Activated T-helper 2 cell treated with anti-CD3 and anti-CD28 coated beads, Interferon-gamma antibody, Interleukin-2, Interleukin-4, amounts not matched to agents 10 μg/mL and 5 μg/mL and 100 μg/mL, durations not matched to agents 14 hours and 24 hours and 36 hours (primary cell): ENCODE measurements at regions of chr17 and their contacts with region 1.

Region 1: DNA sequence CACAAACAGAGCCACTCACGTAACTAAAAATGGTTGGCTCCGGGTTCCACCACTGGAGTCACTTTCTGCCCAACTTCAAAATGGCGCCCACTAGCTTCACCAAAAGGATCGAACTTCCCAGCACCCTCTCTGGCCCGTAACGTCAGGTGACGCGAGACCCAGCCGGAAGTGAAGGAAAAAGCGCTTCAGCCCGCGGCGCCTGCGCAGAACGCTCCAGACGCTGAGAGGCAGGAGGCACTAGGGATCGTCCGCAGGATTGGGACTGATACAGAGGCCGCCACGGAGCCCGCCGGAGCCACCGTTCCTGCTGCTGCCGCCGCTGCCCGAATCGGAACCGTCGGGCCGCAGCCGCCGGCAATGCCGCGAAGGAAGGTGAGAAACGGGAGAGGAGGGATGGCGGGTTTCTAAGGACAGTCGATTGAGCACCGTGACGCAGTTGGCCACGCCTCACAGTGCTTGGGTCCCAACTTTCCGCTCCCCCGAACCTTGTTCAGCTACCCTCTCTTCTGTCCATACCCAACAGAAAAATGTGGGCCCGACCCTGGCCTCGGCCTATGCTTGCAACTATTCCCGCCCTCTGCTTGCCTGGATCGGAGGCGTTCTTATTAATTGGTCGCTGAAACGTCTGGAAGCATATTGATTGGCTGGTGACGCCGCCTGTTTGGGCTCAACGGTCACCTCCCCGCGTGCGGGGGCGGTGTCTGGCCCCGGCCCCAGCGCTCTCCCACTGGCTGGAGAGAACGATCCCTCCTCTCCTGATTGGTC is at the start of gene KAT7:
- DNase-seq: peak; percentile 98
- H3K4me3 Mint-ChIP-seq: peak within 1 kb of the TSS; percentile 91
- H3K27ac Mint-ChIP-seq: peak within 1 kb of the TSS; percentile 97
- H3K4me1 Mint-ChIP-seq: peaks cover 29% of the 10 kb centered on the region
- H3K27me3 Mint-ChIP-seq: no peaks in the 10 kb centered on the region
- total RNA-seq, gene KAT7: 62.1 and 65.0 TPM in 2 replicates

Region 2: DNA sequence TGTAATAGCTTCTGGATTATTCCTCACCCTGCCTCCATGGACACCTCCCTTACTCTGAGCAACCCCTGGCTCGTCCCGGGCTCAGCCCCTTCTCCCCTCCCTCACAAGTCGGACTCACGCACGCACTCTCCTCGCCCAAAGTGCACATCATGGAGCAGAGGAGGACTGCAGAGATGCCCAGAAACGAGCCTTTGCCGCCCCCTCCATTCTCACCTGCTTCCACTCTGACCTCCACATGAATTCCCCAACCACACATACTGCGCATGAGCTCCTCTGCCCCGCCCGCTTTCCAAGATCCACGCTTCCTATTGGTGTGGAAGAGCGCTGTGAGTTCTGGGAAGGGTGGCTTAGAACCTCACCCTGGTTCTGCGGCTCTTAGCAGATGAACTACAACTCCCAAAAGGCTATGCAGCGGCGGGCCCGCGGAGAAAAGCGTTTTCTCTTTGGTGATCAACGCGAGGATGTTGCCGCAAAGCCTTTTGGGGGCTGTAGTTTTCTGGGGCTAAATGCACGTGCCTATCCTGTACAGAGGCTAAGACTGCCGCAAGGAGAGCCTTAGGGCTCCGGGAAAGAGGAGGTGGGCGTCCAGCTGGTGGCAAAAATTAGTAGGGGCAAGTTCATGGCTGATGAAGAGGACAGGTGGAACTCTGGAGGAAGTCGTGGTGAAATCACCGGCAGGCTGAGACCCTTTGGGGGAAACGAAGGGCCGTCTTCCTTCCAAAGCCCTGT is 373.9 kb before region 1 on chr17 and contains the start of gene PHB1:
- intact Hi-C with region 1: loop called (anchors 2 kb)
- DNase-seq: peak; percentile 93
- H3K4me3 Mint-ChIP-seq: peak within 1 kb of the TSS; percentile 99
- H3K27ac Mint-ChIP-seq: peak within 1 kb of the TSS; percentile 87
- H3K4me1 Mint-ChIP-seq: peaks cover 10% of the 10 kb centered on the region
- H3K27me3 Mint-ChIP-seq: peaks cover 10% of the 10 kb centered on the region
- total RNA-seq, gene PHB1: 335 and 339 TPM in 2 replicates

Region 3: DNA sequence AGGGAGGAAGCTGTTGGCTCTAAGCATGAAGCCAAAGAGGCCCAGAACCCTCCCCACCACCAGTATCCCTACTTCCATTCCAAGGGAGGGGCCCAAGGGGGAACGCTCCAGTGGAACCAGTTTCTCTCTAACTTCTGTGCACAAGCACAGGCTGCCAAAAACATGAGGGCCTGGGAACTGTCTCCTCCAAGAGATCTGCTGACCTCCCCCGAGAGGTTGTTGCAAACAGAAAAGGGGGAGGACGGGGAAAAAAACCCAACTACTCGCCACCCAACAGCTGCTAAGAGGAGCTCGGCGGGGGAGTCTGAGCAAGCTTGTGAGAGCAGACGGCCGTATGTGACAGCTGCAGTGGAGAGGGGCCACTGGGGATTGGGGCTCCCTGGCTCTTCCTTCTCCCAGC is 65.2 kb before region 1 on chr17:
- intact Hi-C with region 1: no loop called
- DNase-seq: no peak
- H3K4me3 Mint-ChIP-seq: no peak overlapping the region
- H3K27ac Mint-ChIP-seq: no peak overlapping the region
- H3K4me1 Mint-ChIP-seq: peaks cover 2% of the 10 kb centered on the region
- H3K27me3 Mint-ChIP-seq: no peaks in the 10 kb centered on the region

Region 4: DNA sequence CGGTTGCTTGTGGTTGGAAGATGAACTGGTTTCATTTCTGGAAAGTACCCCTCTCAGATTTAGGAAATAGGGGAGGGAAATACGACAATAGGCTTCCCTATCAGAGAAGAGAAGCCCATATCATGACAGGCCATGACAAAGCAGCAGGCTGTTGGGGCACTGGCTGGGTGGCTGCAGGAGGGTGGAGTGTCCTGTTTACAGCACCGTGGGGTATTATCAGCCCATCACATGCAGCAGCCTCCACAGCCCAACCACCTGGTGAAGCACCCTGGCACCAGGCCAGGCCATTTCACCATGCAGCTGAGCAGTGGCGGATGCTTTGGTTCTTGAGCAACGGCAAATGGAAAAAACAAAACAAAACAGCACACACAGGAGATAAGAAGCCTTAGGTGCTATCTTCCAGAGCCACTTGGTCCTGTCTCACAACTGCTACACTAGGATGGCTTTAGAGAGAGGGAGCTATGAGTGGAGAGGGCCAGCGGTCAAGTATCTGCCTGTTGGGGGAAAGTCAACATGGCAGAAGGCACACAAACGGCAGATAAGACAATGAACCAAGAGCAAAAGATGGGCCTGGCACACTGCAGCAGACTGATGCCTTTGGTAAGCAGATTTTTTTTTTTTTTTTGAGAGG is 48.9 kb before region 1 on chr17:
- intact Hi-C with region 1: loop called (anchors 1 kb)
- DNase-seq: peak; percentile 89
- H3K4me3 Mint-ChIP-seq: peak overlapping the region; percentile 79
- H3K27ac Mint-ChIP-seq: peak overlapping the region; percentile 96
- H3K4me1 Mint-ChIP-seq: peaks cover 63% of the 10 kb centered on the region
- H3K27me3 Mint-ChIP-seq: no peaks in the 10 kb centered on the region

Region 5: GRCh38 chr17:49763735-49764558 is 24.7 kb before region 1 on chr17 and contains the start of gene FAM117A:
- intact Hi-C with region 1: loop called (anchors 1 kb)
- DNase-seq: peak; percentile 97
- H3K4me3 Mint-ChIP-seq: peak within 1 kb of the TSS; percentile 92
- H3K27ac Mint-ChIP-seq: peak within 1 kb of the TSS; percentile 87
- H3K4me1 Mint-ChIP-seq: peaks cover 43% of the 10 kb centered on the region
- H3K27me3 Mint-ChIP-seq: peaks cover 26% of the 10 kb centered on the region
- total RNA-seq, gene FAM117A: 12.2 and 15.8 TPM in 2 replicates

Region 6: DNA sequence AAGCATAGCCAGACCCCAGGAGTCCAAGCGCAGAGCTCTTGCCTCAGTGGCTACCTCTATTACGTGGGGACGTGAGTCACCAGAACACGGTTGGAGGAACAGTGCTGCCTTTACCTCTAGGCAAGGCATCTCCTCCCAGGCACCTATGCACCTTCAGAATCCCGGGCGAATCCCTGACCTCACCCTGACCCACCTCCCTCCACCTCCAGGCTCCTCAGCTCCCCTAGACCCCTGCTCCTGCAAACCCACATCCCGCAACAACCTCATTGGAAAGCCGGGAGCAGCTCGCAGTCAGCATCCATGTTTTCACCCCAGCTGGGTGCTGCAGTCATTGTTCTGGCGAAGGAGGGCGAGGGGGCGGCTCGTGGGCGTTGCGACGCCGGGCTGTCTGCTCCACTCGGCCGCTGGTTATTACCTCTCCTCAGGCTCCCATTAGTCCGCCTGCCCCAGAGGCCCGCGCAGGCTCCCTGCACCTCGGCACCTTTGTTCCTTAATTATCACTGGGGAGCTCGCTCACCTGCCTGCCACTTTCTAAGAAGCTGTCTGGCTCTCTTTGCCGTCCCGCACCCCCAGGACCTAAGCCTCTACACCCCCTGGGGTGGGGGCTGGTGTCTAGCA is 155.7 kb after region 1 on chr17:
- intact Hi-C with region 1: no loop called
- DNase-seq: no peak
- H3K4me3 Mint-ChIP-seq: no peak overlapping the region
- H3K27ac Mint-ChIP-seq: no peak overlapping the region
- H3K4me1 Mint-ChIP-seq: no peaks in the 10 kb centered on the region
- H3K27me3 Mint-ChIP-seq: peaks cover 20% of the 10 kb centered on the region